Natural killer cell (primary cell): ENCODE measurements at regions of chr19 and their contacts with region 1.

Region 1: DNA sequence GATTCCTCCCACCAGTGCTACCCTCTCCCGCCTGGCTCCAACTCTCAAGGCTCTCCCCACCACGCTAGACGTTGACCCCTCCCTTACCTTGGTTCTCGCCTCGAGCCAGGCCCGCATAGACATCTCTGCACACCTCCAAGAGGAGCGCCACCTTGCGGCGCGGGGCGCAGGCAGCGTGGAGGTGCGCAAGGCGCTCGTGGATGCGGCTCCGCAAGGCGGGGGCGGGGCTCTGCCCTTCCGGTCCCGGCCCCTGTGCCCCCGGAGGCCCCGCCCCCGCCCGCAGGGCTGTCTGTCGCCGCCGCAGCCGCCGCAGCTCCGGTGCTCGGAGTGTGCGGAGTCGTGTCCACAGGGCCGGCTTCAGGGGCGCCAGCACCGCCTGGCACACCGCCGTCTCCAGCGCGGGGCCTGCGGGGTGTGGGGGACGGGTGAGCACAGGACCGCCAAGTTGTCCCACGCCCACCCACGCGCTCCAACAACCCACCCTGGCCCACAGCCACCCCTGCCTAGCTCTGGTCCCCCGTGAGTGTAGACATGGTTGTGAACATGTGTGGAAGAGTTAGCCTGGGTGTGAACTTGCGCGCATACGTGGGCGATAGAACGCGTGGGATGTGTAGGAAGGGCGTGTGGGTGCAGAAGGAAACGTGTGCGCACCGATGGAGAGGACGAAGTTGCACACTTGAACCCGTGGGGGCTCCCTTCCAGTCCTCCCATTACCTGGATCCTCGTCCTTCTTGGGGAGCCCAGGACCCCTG is 8.0 kb downstream of the RINL start:
- DNase-seq: peak; percentile 86 to 99
- ATAC-seq: peak; percentile 71 to 91 (median 82)
- H3K4me3 ChIP-seq: peak overlapping the region; percentile 68
- H3K4me3 Mint-ChIP-seq: peak overlapping the region; percentile 92
- H3K27ac ChIP-seq: peak overlapping the region; percentile 70
- H3K27ac Mint-ChIP-seq: peak overlapping the region; percentile 80 to 94
- H3K4me1 ChIP-seq: peaks cover 41% of the 10 kb centered on the region
- H3K4me1 Mint-ChIP-seq: peaks cover 24 to 41% of the 10 kb centered on the region in 2 donors
- H3K27me3 ChIP-seq: no peaks in the 10 kb centered on the region
- H3K27me3 Mint-ChIP-seq: no peaks in the 10 kb centered on the region
- CTCF ChIP-seq: peak; percentile 95

Region 2: GRCh38 chr19:38676023-38676877 is 193.8 kb before region 1 on chr19:
- intact Hi-C with region 1: loop called (anchors 5 kb)
- DNase-seq: no peak
- ATAC-seq: no peak
- H3K4me3 ChIP-seq: no peak overlapping the region
- H3K4me3 Mint-ChIP-seq: peak overlapping the region; percentile 77
- H3K27ac ChIP-seq: peak overlapping the region; percentile 67
- H3K27ac Mint-ChIP-seq: peak overlapping the region; percentile 98 to 100
- H3K4me1 ChIP-seq: peaks cover 88% of the 10 kb centered on the region
- H3K4me1 Mint-ChIP-seq: peaks cover 81 to 88% of the 10 kb centered on the region in 2 donors
- H3K27me3 ChIP-seq: no peaks in the 10 kb centered on the region
- H3K27me3 Mint-ChIP-seq: no peaks in the 10 kb centered on the region
- CTCF ChIP-seq: no peak

Region 3: DNA sequence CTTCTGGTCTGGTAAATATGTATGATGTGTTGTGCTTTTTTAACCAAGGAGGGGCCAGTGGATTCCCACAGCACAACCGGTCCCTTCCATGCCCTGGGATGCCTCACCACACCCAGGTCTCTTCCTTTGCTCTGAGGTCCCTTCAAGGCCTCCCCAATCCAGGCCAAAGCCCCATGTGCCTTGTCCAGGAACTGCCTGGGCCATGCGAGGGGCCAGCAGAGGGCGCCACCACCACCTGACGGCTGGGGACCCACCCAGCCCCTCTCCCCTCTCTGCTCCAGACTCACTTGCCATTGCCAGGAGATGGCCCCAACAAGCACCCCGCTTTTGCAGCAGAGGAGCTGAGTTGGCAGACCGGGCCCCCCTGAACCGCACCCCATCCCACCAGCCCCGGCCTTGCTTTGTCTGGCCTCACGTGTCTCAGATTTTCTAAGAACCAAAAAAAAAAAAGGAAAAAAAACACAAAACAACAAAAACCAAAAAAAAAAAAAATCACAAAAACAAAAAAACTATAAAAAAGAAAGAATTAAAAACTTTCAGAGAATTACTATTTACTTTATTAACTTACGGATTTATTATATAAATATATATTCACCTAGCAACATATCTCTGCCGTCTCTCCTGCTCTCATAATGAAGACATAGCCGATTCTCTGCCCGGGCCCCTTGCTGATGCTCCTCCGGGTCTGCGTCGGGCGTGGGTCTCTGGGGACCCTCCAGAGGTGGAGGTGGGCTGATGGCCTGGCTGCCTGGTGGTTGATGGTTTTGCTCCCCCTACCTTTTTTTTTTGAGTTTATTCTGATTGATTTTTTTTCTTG is 140.2 kb before region 1 on chr19:
- intact Hi-C with region 1: loop called (anchors 10 kb)
- DNase-seq: peak; percentile 72 to 84
- ATAC-seq: peak; percentile 18 to 52 (median 38)
- H3K4me3 ChIP-seq: no peak overlapping the region
- H3K4me3 Mint-ChIP-seq: peak overlapping the region; percentile 72
- H3K27ac ChIP-seq: no peak overlapping the region
- H3K27ac Mint-ChIP-seq: peak overlapping the region; percentile 80 to 84
- H3K4me1 ChIP-seq: peaks cover 90% of the 10 kb centered on the region
- H3K4me1 Mint-ChIP-seq: peaks cover 61 to 77% of the 10 kb centered on the region in 2 donors
- H3K27me3 ChIP-seq: no peaks in the 10 kb centered on the region
- H3K27me3 Mint-ChIP-seq: no peaks in the 10 kb centered on the region
- CTCF ChIP-seq: peak; percentile 83

Region 4: GRCh38 chr19:38831142-38831605 is 38.9 kb before region 1 on chr19:
- intact Hi-C with region 1: loop called (anchors 1 kb)
- DNase-seq: no peak
- ATAC-seq: peak; percentile 39 to 52 (median 43)
- H3K4me3 ChIP-seq: peak overlapping the region; percentile 64
- H3K4me3 Mint-ChIP-seq: peak overlapping the region; percentile 97
- H3K27ac ChIP-seq: peak overlapping the region; percentile 69
- H3K27ac Mint-ChIP-seq: peak overlapping the region; percentile 93 to 95
- H3K4me1 ChIP-seq: peaks cover 16% of the 10 kb centered on the region
- H3K4me1 Mint-ChIP-seq: peaks cover 14 to 22% of the 10 kb centered on the region in 2 donors
- H3K27me3 ChIP-seq: no peaks in the 10 kb centered on the region
- H3K27me3 Mint-ChIP-seq: no peaks in the 10 kb centered on the region
- CTCF ChIP-seq: no peak

Region 5: GRCh38 chr19:38849860-38850435 is 20.1 kb before region 1 on chr19 and contains the start of gene HNRNPL:
- intact Hi-C with region 1: loop called (anchors 1 kb)
- DNase-seq: peak in 1 of 2 donors; percentile 98
- ATAC-seq: peak; percentile 58 to 85 (median 69)
- H3K4me3 ChIP-seq: peak within 1 kb of the TSS; percentile 84
- H3K4me3 Mint-ChIP-seq: peak within 1 kb of the TSS; percentile 96
- H3K27ac ChIP-seq: peak within 1 kb of the TSS; percentile 97
- H3K27ac Mint-ChIP-seq: peak within 1 kb of the TSS; percentile 99 to 100
- H3K4me1 ChIP-seq: peaks cover 61% of the 10 kb centered on the region
- H3K4me1 Mint-ChIP-seq: peaks cover 59 to 69% of the 10 kb centered on the region in 2 donors
- H3K27me3 ChIP-seq: no peaks in the 10 kb centered on the region
- H3K27me3 Mint-ChIP-seq: no peaks in the 10 kb centered on the region
- CTCF ChIP-seq: peak; percentile 26
- total RNA-seq, gene HNRNPL: 636 to 800 (median 702) TPM

Region 6: GRCh38 chr19:38899447-38900219 is 29.6 kb after region 1 on chr19 and contains the starts of genes NFKBIB and SIRT2:
- intact Hi-C with region 1: loop called (anchors 1 kb)
- DNase-seq: peak; percentile 97 to 100
- ATAC-seq: peak; percentile 82 to 95 (median 82)
- H3K4me3 ChIP-seq: peak within 1 kb of the TSS; percentile 82
- H3K4me3 Mint-ChIP-seq: peak within 1 kb of the TSS; percentile 97
- H3K27ac ChIP-seq: peak within 1 kb of the TSS; percentile 95
- H3K27ac Mint-ChIP-seq: peak within 1 kb of the TSS; percentile 96 to 98
- H3K4me1 ChIP-seq: peaks cover 35% of the 10 kb centered on the region
- H3K4me1 Mint-ChIP-seq: peaks cover 64 to 65% of the 10 kb centered on the region in 2 donors
- H3K27me3 ChIP-seq: no peaks in the 10 kb centered on the region
- H3K27me3 Mint-ChIP-seq: no peaks in the 10 kb centered on the region
- CTCF ChIP-seq: no peak
- total RNA-seq, gene NFKBIB: 78.0 to 125 (median 118) TPM
- total RNA-seq, gene SIRT2: 171 to 283 (median 208) TPM

Region 7: GRCh38 chr19:38924388-38924787 is 54.4 kb after region 1 on chr19:
- intact Hi-C with region 1: no loop called
- DNase-seq: peak; percentile 65 to 74
- ATAC-seq: peak; percentile 78 to 89 (median 84)
- H3K4me3 ChIP-seq: no peak overlapping the region
- H3K4me3 Mint-ChIP-seq: peak overlapping the region; percentile 33
- H3K27ac ChIP-seq: peak overlapping the region; percentile 90
- H3K27ac Mint-ChIP-seq: peak overlapping the region; percentile 91 to 99
- H3K4me1 ChIP-seq: peaks cover 60% of the 10 kb centered on the region
- H3K4me1 Mint-ChIP-seq: peaks cover 25 to 48% of the 10 kb centered on the region in 2 donors
- H3K27me3 ChIP-seq: no peaks in the 10 kb centered on the region
- H3K27me3 Mint-ChIP-seq: no peaks in the 10 kb centered on the region
- CTCF ChIP-seq: no peak